ENCODE measurements at regions of chr12 and their contacts with region 1.

Region 1: DNA sequence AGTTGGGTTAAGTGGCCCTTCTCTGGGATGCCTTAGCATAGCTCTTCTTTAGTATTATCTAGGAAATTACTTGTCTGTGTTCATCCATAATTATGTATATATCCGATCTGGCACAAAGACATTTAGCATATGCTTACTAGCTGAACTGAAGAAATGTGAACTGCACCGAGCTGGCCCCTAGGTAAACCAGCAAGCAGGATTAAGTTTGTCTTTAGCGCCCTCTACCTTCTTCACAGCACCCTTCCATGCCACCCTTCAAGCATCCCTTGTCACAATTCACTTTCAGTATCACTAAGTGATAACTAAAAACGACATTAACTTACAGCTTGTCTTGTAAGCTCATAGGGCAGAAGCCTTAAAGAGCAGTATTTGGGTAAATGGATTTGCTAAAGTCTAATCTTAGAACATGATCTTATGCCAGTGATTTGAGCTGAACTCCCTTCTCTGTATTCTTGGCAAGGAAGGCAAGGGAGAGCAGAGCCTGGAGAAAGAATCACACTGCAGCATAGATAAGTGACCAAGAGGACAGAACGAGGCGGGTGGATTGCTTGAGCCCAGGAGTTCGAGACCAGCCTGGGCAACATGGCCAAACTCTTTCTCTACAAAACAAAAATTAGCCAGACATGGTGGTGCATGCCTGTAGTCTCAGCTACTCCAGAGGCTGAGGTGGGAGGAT is 2.6 kb upstream of the HAL start:
- DNase-seq: no peak
- ATAC-seq: peak; percentile 86
- H3K4me3 ChIP-seq: no peak overlapping the region
- H3K27ac ChIP-seq: no peak overlapping the region
- H3K4me1 ChIP-seq: no peaks in the 10 kb centered on the region
- H3K27me3 ChIP-seq: no peaks in the 10 kb centered on the region

Region 2: GRCh38 chr12:95574799-95575452 is 423.8 kb before region 1 on chr12:
- intact Hi-C with region 1: loop called in 1 of 2 experiments (anchors 10 kb)
- DNase-seq: no peak
- ATAC-seq: peak; percentile 59
- H3K4me3 ChIP-seq: no peak overlapping the region
- H3K27ac ChIP-seq: no peak overlapping the region
- H3K4me1 ChIP-seq: no peaks in the 10 kb centered on the region
- H3K27me3 ChIP-seq: no peaks in the 10 kb centered on the region

Region 3: DNA sequence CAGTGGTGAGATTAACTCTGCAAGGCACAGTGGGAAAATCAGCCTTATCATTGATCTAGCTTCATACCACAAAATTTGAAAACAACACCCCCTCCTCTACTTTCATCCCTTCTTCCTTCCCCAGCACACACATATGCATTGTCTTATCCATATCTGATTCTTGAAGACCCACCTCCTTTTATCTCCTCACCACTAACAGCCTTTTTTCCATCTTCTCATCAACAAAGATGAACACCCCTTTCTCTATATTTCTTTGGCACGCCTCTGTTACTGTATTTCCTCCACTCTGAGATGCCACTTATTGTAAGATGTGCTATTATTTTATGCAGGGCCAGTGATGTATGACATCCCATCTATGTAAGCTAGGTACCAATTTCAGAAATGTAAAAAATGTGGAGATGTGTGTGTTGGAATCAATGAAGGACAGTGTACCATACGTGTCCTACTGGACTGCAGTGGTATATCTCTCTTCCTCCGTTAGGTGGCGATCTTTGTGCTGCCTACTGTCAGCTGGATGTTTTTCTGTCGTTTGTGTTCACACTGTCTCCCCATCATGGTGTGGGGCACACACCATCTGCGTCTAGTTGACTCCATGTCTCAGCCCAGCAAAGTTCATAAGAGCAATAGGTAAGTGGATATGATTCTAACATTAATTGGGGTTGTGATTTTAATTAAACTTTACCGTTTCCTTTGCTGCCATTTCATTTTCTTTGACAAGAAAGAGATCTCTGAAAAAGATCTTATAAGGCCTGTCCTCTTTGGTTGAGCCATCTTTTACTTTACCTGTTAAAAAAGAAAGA is 80.4 kb before region 1 on chr12:
- intact Hi-C with region 1: loop called in 1 of 2 experiments (anchors 5 kb)
- DNase-seq: peak in 1 of 2 donors; percentile 42
- ATAC-seq: peak; percentile 74
- H3K4me3 ChIP-seq: no peak overlapping the region
- H3K27ac ChIP-seq: no peak overlapping the region
- H3K4me1 ChIP-seq: no peaks in the 10 kb centered on the region
- H3K27me3 ChIP-seq: no peaks in the 10 kb centered on the region

Region 4: GRCh38 chr12:96070670-96071279 is 72.0 kb after region 1 on chr12:
- intact Hi-C with region 1: no loop called
- DNase-seq: no peak
- ATAC-seq: no peak
- H3K4me3 ChIP-seq: no peak overlapping the region
- H3K27ac ChIP-seq: no peak overlapping the region
- H3K4me1 ChIP-seq: no peaks in the 10 kb centered on the region
- H3K27me3 ChIP-seq: no peaks in the 10 kb centered on the region

Measured in aorta (tissue), 5 donors.